CD8-positive, alpha-beta memory T cell (primary cell): ENCODE measurements at regions of chr16 and their contacts with region 1.

Region 1: DNA sequence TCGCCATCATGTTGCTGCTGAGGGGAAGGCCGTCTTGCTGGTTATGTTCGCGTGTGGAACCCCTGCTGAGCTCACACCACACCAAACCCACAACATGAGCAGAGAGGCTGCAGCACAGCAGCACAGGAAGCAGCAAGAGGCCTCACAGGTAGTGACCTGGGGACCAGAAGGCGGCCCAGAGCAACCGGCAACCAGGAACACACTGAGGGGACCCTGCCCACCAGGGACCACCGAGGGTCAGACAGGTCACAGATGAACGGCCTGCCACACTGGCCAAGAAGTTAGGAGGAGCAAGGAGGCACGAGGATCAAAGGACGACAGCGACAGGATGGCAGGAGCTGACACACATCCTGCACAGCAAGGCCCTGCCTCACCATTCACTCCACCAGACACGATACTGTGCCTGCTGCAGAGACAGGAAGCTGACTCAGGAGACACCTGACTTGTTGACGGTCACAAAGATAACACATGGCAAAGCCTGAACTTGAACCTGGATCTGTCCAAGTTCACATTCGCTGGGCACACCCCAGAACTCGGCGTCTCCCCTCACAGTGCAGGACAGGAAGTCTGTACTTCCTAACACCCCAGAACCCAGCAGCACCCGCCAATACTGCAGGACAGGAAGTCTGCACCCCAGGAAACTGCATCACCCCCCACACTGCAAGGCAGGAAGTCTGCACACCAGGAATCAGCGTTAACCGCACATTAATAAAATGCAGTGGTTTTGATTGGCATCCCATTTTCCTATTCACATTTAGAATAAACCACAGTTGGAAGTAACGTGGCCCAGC is 98.5 kb downstream of the ZNF778 start:
- DNase-seq: peak; percentile 68 to 89 (median 80)
- H3K4me3 ChIP-seq: peak overlapping the region; percentile 51
- H3K4me3 Mint-ChIP-seq: peak overlapping the region; percentile 74 to 95 (median 81)
- H3K27ac ChIP-seq: peak overlapping the region; percentile 81
- H3K27ac Mint-ChIP-seq: peak overlapping the region; percentile 92 to 99 (median 99)
- H3K4me1 ChIP-seq: peaks cover 89% of the 10 kb centered on the region
- H3K4me1 Mint-ChIP-seq: peaks cover 87 to 100% (median 96%) of the 10 kb centered on the region in 3 donors
- H3K27me3 ChIP-seq: no peaks in the 10 kb centered on the region
- H3K27me3 Mint-ChIP-seq: peaks cover 0 to 3% of the 10 kb centered on the region in 2 donors

Region 2: DNA sequence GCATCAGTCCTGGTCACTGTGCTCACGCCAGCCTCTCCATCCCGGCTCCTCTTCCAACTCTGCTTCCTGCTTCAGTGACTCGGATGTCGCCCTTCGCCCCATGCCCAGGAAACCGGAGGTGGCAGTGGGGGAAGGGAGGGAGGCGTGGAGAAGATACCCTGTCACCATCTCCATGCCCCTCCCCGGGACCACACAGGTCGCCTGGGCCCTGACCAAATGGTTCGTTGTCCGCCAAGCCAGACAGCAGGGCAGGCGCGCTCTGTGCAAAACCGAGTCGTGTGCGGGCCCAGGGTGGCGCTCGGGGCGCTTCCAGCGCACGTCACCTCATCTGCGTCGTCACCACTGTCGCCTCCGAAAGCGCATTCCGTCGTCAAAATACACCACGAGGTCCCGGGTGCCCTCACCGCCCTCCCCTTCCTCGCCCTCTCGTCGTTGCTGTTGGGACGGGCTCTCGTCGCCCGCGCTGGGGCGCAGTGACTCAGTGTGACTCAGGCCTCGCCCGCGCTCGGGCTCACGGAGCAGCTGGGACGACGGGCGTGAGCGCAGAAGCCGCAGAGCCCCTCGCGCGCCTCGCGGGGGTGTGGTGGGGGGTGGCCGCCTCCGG is 59.2 kb before region 1 on chr16:
- CTCF ChIA-PET with region 1: no interaction called
- POLR2A ChIA-PET with region 1: no interaction called
- DNase-seq: peak; percentile 63 to 81 (median 66)
- H3K4me3 ChIP-seq: no peak overlapping the region
- H3K4me3 Mint-ChIP-seq: peak overlapping the region in 6 of 7 donors; percentile 15 to 85 (median 50)
- H3K27ac ChIP-seq: no peak overlapping the region
- H3K27ac Mint-ChIP-seq: peak overlapping the region in 4 of 8 donors; percentile 38 to 78 (median 46)
- H3K4me1 ChIP-seq: peaks cover 7% of the 10 kb centered on the region
- H3K4me1 Mint-ChIP-seq: peaks cover 12 to 20% (median 18%) of the 10 kb centered on the region in 3 donors
- H3K27me3 ChIP-seq: peaks cover 4% of the 10 kb centered on the region
- H3K27me3 Mint-ChIP-seq: peaks cover 24 to 29% of the 10 kb centered on the region in 2 donors

Region 3: DNA sequence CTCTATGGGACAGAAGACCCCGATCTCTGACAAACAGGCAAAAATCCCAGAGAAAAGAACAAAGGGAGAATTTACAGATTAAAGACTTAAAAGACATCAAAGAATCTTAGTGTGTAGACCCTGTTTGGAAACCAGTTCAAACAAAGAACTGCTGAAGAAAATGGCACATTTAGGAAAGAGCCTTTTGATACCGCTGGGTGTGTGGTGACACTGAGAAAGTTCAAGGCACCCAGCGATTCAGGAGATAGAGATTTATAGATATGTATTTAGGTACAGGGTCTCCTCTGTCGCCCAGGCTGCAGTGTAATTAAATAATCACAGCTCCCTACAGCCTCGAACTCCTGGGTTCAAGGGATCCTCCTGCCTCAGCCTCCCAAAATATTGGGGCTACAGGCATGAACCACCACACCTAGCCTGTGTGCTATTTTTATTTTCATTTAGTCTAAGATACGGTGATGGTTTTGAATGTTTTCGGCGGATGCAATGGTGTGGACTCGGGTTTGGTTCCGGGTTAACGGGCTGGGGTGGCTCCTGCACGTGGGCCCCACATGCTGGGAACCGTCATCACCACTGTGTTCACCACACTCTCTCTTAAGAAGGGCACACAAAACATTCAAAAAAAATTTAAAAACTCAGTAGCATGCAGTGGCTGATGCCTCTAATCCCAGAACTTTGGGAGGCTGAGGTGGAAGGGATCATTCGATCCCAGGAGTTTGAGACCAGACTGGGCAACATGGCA is 15.6 kb after region 1 on chr16:
- CTCF ChIA-PET with region 1: interaction called, 10 read pairs
- POLR2A ChIA-PET with region 1: interaction called, 3 read pairs
- DNase-seq: peak in 2 of 5 donors; percentile 44 to 74
- H3K4me3 ChIP-seq: no peak overlapping the region
- H3K4me3 Mint-ChIP-seq: peak overlapping the region in 6 of 7 donors; percentile 9 to 68 (median 50)
- H3K27ac ChIP-seq: peak overlapping the region; percentile 25
- H3K27ac Mint-ChIP-seq: peak overlapping the region; percentile 69 to 96 (median 88)
- H3K4me1 ChIP-seq: peaks cover 83% of the 10 kb centered on the region
- H3K4me1 Mint-ChIP-seq: peaks cover 78 to 93% (median 91%) of the 10 kb centered on the region in 3 donors
- H3K27me3 ChIP-seq: no peaks in the 10 kb centered on the region
- H3K27me3 Mint-ChIP-seq: peaks cover 0 to 2% of the 10 kb centered on the region in 2 donors